PC-9 (cell line): ENCODE measurements at regions of chr17 and their contacts with region 1.

Region 1: DNA sequence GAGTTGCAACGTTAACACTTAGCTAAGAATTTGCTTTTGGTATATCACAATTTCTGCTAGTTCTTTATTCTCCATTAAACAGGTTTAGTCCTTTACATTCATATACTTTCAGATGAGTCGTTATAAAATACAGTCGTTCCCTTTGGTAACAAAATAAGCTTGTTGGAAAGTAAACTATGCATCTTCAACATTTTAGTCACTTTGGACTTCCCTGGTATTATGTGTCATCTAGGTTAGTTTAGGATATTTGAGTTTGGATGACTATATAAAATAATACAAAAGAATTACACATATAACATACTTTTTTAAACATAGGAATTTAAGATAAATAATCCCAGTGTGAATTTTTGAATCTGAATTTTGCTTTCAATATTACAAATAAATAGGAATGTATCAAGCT is 351.5 kb downstream of the BCAS3 start:
- DNase-seq: no peak
- H3K4me3 ChIP-seq: no peak overlapping the region
- H3K27ac ChIP-seq: no peak overlapping the region
- H3K4me1 ChIP-seq: no peaks in the 10 kb centered on the region
- H3K27me3 ChIP-seq: no peaks in the 10 kb centered on the region
- CTCF ChIP-seq: no peak

Region 2: DNA sequence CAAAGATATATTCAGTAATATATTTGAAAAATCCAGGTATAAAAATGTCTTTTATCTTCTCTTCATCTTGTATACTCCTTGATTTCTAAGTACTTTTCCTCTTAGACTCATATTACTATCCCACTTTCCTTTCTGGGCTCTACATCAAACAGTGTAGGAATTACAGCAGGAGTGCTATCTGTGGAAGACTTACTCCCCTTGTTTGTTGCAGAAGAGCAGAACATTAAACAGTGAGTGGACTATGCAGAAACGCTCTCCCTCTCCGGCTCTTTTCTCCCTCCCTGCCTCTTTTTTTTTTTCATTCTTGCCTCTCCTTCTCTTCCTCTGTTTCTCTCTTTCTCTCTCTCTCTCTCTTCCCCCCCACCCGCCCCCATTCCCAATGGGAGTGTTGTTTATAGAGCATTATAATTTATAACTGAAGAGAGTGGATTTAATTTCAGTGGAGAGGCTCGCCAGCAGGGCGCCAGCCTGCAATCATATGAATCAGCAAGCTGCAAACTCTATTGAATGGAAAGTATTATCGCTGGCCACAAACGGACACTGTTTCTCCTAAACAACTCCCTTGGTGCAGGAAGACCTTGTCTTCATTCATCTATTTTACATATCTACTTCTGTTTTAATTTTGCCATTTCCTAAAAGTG is 128.2 kb after region 1 on chr17:
- CTCF ChIA-PET with region 1: no interaction called
- POLR2A ChIA-PET with region 1: interaction called, 11 read pairs
- intact Hi-C with region 1: no loop called
- DNase-seq: no peak
- H3K4me3 ChIP-seq: no peak overlapping the region
- H3K27ac ChIP-seq: no peak overlapping the region
- H3K4me1 ChIP-seq: no peaks in the 10 kb centered on the region
- H3K27me3 ChIP-seq: no peaks in the 10 kb centered on the region
- CTCF ChIP-seq: no peak